Heart left ventricle (tissue), 16 donors: ENCODE measurements at regions of chr15 and their contacts with region 1.

Region 1: DNA sequence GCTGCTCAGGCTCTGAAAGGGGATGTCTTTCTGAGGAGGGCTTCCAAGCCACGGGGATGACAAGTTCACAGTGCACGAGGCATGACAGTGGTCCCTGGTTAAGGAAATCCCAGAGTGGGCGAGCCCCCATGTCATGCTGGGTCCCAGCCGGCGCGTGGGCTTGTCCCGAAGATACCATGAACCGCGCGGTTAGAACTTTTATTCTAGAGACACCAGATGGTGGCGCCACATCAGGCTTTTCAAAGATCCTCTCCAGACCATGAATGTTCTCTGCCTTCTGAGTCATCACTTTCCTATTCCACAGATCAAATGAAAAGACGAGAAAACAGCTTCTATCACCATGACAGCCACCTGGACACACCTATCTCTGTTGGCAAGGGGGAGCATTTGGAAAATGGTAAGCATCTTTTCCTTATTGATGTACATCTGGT is 227.8 kb upstream of the LYSMD4 start:
- DNase-seq: peak in 2 of 5 donors; percentile 29 to 42
- ATAC-seq: peak in 3 of 4 donors; percentile 62 to 75 (median 68)
- H3K4me3 ChIP-seq: no peak overlapping the region
- H3K27ac ChIP-seq: no peak overlapping the region
- H3K4me1 ChIP-seq: no peaks in the 10 kb centered on the region
- H3K27me3 ChIP-seq: peaks cover 0 to 8% (median 0%) of the 10 kb centered on the region in 9 donors
- CTCF ChIP-seq: peak in 10 of 12 donors; percentile 19 to 62 (median 47)
- POLR2A ChIP-seq: no peak

Region 2: DNA sequence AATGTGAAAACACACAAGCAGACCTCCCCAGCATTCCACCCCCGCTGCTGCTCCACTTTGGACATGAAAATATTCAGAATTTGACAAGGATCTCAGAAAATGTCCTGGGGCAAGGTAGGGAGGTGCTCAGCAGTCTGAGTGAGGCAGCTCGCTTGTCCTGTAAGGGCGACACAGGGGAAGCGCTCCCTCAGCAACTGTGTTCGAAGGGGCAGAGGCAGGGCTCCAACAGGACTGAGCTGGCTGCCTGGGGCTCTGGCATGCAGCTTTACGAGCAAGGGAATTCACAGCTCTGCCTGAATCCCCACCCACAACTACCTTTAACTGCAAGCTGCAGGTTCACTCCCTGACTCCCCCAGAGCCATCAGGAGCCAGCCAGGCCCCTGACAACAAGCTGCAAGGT is 59.2 kb after region 1 on chr15:
- intact Hi-C with region 1: loop called in 1 of 10 experiments (anchors 10 kb)
- DNase-seq: no peak
- ATAC-seq: peak in 3 of 4 donors; percentile 17 to 49 (median 44)
- H3K4me3 ChIP-seq: no peak overlapping the region
- H3K27ac ChIP-seq: peak overlapping the region in 1 of 12 donors; percentile 56
- H3K4me1 ChIP-seq: peaks cover 0 to 21% (median 0%) of the 10 kb centered on the region in 12 donors
- H3K27me3 ChIP-seq: no peaks in the 10 kb centered on the region
- CTCF ChIP-seq: no peak
- POLR2A ChIP-seq: no peak

Region 3: DNA sequence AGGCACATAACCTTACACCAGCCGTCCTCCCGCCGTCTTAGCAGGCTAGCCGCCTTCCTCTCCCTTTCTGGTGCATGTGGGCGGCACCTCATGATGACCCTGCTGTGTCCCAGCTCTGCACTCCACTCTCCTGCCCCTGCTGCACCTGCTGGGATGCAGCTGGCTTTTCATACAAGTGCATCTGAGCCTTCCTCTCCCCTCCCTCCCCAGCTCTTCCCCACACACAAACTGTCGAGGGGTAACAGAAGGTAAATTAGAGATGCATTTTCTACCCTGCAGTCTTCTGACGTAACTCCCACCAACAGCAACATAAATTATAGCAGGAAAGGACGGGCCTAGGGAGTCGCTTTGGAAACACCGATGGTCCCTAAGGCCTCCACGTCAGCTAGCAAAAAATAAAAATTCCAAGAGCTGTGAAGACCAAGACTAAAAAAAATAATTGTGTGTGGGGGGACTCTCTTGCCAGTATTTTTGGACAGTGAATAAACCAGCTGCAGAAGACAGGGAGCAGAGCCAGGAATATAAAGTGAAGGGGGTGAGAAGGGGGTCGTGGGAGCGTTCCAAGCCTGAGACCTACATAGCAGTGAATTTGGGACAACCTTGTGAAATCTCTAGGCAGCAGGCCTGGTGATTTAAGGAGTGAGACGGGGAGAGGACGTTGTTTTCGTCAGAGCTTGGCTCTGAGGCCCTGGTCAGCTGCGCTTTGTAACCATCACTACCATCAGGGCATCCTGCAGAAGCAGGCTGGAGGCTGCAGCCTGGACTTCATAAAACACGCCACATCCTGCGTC is 164.6 kb after region 1 on chr15:
- intact Hi-C with region 1: loop called in 9 of 10 experiments (anchors 5 to 10 kb)
- DNase-seq: peak in 4 of 5 donors; percentile 52 to 83 (median 72)
- ATAC-seq: peak; percentile 57 to 93 (median 88)
- H3K4me3 ChIP-seq: no peak overlapping the region
- H3K27ac ChIP-seq: peak overlapping the region in 9 of 12 donors; percentile 5 to 68 (median 51)
- H3K4me1 ChIP-seq: peaks cover 0 to 14% (median 0%) of the 10 kb centered on the region in 12 donors
- H3K27me3 ChIP-seq: no peaks in the 10 kb centered on the region
- CTCF ChIP-seq: no peak
- POLR2A ChIP-seq: no peak

Region 4: DNA sequence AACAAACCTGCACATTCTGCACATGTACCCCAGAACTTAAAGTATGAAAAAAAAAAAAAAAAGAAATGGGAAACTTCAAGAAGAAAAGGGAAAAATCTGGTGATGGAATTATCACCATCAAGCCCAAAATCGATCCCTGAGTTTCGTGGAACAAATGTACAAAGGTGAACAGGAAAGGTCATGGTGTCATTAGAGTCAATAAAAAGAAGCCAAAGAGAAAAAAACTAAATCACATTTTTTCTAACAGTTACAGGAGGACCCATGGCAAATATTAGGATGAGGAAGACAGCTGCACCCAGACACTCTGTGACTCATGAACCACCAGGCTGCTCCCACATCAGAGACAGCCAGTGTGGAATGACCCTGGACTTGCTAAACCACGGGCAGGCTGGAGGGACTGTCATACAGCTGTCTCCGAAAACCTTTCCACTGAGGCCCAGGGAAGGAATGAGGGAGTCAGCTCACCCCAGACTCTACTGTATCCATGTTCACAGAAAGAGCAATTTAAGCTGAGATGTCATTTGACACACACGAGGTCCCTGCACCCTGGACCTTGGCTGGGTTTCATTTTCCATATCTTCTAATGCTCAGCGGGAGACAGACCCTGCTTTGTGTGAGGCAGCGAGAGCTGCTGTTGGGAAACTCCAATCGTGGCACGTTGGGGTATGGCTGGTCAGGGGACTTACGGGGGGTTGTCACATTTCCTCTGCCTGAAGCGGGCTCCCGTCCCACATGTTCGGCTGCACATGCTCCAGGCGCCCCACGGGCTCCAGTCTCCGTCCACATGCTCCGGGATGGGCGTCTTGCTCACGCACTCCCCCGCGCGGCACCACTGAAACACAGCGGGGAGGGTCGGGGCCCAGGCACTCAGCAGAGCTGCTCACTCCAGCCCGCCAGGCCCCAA is 170.5 kb after region 1 on chr15:
- intact Hi-C with region 1: loop called (anchors 2 to 10 kb)
- DNase-seq: peak; percentile 71 to 81 (median 77)
- ATAC-seq: peak in 3 of 4 donors; percentile 91 to 94 (median 92)
- H3K4me3 ChIP-seq: peak overlapping the region in 9 of 12 donors; percentile 20 to 52 (median 39)
- H3K27ac ChIP-seq: peak overlapping the region in 8 of 12 donors; percentile 3 to 64 (median 44)
- H3K4me1 ChIP-seq: peaks cover 0 to 13% (median 0%) of the 10 kb centered on the region in 12 donors
- H3K27me3 ChIP-seq: no peaks in the 10 kb centered on the region
- CTCF ChIP-seq: peak; percentile 39 to 80 (median 57)
- POLR2A ChIP-seq: no peak